ENCODE measurements at regions of chr3 and their contacts with region 1.

Region 1: DNA sequence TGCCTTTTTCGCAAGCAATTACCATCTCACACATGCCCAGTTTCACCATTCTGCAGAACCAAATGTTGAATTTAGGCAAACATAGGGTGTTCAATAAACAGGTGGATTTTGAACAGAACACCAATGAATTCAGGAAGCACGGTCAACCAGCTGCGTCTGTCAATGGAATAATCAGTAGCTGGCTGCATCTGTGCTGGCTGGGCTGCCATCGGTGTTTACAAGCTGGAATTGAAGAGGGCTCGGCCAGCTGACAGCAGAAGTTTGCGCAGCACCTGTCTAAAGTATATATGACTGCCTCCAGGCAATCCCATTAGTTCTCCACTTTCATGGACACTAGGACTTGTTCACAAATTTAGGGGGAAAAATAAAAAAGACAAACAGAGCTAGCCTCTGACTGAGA is 996.4 kb upstream of the CFAP20DC start:
- DNase-seq: no peak
- H3K4me3 Mint-ChIP-seq: no peak overlapping the region
- H3K27ac Mint-ChIP-seq: peak overlapping the region; percentile 47
- H3K4me1 Mint-ChIP-seq: peaks cover 63% of the 10 kb centered on the region
- H3K27me3 Mint-ChIP-seq: no peaks in the 10 kb centered on the region

Region 2: GRCh38 chr3:60030982-60031381 is 15.2 kb before region 1 on chr3:
- CTCF ChIA-PET with region 1: no interaction called
- POLR2A ChIA-PET with region 1: no interaction called
- intact Hi-C with region 1: loop called (anchors 1 kb)
- DNase-seq: no peak
- H3K4me3 Mint-ChIP-seq: no peak overlapping the region
- H3K27ac Mint-ChIP-seq: peak overlapping the region; percentile 14
- H3K4me1 Mint-ChIP-seq: peaks cover 57% of the 10 kb centered on the region
- H3K27me3 Mint-ChIP-seq: no peaks in the 10 kb centered on the region

Region 3: GRCh38 chr3:60192297-60193114 is 146.3 kb after region 1 on chr3:
- CTCF ChIA-PET with region 1: no interaction called
- POLR2A ChIA-PET with region 1: no interaction called
- intact Hi-C with region 1: loop called (anchors 1 kb)
- DNase-seq: peak; percentile 48
- H3K4me3 Mint-ChIP-seq: no peak overlapping the region
- H3K27ac Mint-ChIP-seq: peak overlapping the region; percentile 64
- H3K4me1 Mint-ChIP-seq: peaks cover 29% of the 10 kb centered on the region
- H3K27me3 Mint-ChIP-seq: peaks cover 3% of the 10 kb centered on the region

Region 4: DNA sequence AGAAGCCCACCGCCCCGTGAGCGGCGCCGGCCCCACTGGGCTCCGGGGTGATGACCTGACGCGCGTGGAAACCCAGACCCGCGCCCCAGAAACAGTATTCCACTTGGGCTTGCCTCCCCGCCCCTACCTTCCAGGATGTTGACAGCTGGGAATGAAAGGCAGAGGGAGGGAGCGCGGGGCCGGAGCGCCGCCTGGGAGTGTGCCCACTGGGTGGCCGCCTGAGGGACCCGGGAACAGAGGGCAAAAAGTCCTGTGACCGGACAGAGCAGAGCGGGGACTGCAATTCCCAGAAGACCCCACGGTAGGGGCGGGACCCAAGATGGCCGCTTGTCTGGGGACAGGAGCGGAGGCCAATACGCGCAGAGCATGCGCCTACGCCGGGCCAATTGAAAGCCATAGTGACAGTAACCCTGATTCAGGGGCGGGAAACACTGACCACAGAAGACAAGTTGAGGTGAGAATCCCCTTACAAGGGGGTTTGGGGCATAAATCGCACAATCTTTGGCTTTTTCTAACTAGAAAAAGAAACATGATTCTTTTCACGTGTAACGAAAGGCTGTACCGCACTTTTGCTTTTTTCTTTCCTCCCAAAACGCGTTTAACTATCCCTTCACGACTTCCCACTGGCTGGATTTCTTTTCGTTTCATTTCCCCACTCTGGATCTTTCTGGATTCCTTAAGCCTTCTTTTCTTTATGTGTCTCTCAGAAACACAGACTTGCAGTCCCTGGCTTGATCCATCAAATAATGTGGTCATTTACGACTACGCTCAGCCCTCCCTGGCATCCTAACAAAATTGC is 1205.2 kb after region 1 on chr3 and contains the start of gene FHIT:
- CTCF ChIA-PET with region 1: no interaction called
- POLR2A ChIA-PET with region 1: no interaction called
- intact Hi-C with region 1: loop called (anchors 10 kb)
- DNase-seq: peak; percentile 95
- H3K4me3 Mint-ChIP-seq: peak within 1 kb of the TSS; percentile 91
- H3K27ac Mint-ChIP-seq: peak within 1 kb of the TSS; percentile 83
- H3K4me1 Mint-ChIP-seq: peaks cover 17% of the 10 kb centered on the region
- H3K27me3 Mint-ChIP-seq: peaks cover 2% of the 10 kb centered on the region
- total RNA-seq, gene FHIT: 7.2 to 8.7 TPM

Measured in activated CD4-positive, alpha-beta memory T cell treated with anti-CD3 and anti-CD28 coated beads for 36 hours (primary cell).